ENCODE measurements at regions of chr16 and their contacts with region 1.

Region 1: GRCh38 chr16:84617791-84618580 is at the start of gene COTL1:
- DNase-seq: peak; percentile 98 to 99 (median 99)
- H3K4me3 ChIP-seq: peak within 1 kb of the TSS; percentile 52
- H3K27ac ChIP-seq: peak within 1 kb of the TSS; percentile 57 to 66
- H3K4me1 ChIP-seq: peaks cover 22% of the 10 kb centered on the region
- H3K27me3 ChIP-seq: no peaks in the 10 kb centered on the region
- CTCF ChIP-seq: peak in 1 of 3 donors; percentile 8
- EP300 ChIP-seq: peak; percentile 40
- POLR2A ChIP-seq: peak; percentile 68
- total RNA-seq, gene COTL1: 13.8 to 46.4 (median 26.1) TPM

Region 2: DNA sequence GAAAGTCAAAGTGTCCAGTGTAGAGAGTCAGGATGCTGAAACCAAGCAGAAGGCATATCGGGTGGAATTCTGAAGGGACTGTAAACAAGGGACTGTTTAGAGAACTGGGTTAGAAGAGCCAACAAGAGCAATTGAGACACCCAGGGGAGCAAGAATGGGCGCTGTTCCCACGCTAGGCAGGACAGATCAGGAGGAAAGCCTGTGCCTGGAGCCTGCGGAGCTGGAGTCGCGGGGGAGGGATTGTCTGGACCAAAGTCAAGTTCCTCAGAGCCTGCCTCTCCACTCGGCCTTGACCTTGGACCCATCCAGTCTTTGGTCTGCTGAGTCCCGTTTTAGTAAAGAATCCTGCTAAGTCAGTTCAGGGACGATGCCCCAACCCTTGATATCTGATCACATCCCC is 15.6 kb after region 1 on chr16:
- intact Hi-C with region 1: loop called in 1 of 4 experiments (anchors 1 kb)
- DNase-seq: peak; percentile 92 to 97 (median 96)
- H3K4me3 ChIP-seq: no peak overlapping the region
- H3K27ac ChIP-seq: peak overlapping the region in 1 of 2 donors; percentile 64
- H3K4me1 ChIP-seq: peaks cover 12% of the 10 kb centered on the region
- H3K27me3 ChIP-seq: no peaks in the 10 kb centered on the region
- CTCF ChIP-seq: no peak
- EP300 ChIP-seq: no peak
- POLR2A ChIP-seq: no peak

Region 3: GRCh38 chr16:84726079-84726668 is 108.2 kb after region 1 on chr16:
- intact Hi-C with region 1: loop called (anchors 5 kb)
- DNase-seq: peak; percentile 89 to 96 (median 95)
- H3K4me3 ChIP-seq: no peak overlapping the region
- H3K27ac ChIP-seq: no peak overlapping the region
- H3K4me1 ChIP-seq: peaks cover 7% of the 10 kb centered on the region
- H3K27me3 ChIP-seq: no peaks in the 10 kb centered on the region
- CTCF ChIP-seq: peak; percentile 87 to 92 (median 88)
- EP300 ChIP-seq: no peak
- POLR2A ChIP-seq: no peak